ENCODE measurements at regions of chr3 and their contacts with region 1.

Region 1: DNA sequence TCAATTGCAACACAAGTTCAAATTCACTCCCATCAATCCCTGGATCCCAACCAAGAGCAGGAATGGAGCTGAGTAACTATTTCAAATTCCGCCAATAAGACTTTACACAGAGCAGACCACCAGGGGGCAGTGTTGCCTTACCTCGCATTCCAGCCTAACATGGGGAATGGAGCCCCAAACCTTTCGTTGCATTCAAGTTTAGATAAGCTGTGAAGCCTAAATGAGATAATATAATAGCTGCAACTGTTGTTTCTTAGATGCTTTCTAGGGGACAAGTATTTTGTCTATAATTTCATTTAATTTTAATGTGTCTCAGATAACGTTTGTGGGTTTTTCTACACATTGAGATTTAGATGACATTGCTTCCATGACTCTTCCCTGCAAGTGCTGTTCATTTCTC is 186.7 kb downstream of the NSUN3 start:
- DNase-seq: peak; percentile 64 to 81 (median 71)
- H3K4me3 ChIP-seq: no peak overlapping the region
- H3K27ac ChIP-seq: no peak overlapping the region
- H3K4me1 ChIP-seq: peaks cover 0 to 4% (median 1%) of the 10 kb centered on the region in 4 experiments
- H3K27me3 ChIP-seq: no peaks in the 10 kb centered on the region

Region 2: DNA sequence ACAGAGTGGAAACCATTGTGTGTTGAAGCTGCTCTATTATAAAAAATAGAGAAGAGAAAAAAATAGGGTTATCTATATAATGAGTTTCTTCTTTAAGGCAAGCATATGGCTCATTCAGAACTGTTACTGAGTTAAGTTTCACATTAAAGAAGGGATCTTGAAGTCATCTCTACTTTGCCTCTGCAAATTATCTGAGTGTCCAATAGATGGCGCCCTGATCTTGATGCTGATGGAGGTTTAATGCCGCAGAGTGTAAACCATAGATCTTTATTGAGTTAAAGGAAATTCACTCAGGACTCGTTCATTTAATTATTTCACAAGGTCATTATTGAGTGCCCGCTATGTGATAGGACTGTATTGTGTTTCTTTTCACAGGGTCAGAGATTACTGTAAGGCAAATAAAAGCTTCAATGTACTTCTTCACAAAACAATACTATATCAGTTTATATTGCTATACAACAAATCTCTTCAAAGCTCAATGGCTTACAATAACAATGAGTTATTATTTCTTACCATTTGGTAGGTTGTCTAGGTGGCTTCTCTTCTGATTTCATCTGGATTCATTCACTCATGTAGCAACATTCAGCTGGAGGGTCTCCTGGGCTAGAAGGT is 15.3 kb before region 1 on chr3:
- CTCF ChIA-PET with region 1: interaction called, 20 read pairs
- POLR2A ChIA-PET with region 1: no interaction called
- DNase-seq: peak; percentile 52 to 79 (median 73)
- H3K4me3 ChIP-seq: no peak overlapping the region
- H3K27ac ChIP-seq: no peak overlapping the region
- H3K4me1 ChIP-seq: peaks cover 10 to 13% (median 11%) of the 10 kb centered on the region in 4 experiments
- H3K27me3 ChIP-seq: no peaks in the 10 kb centered on the region

Region 3: GRCh38 chr3:94285870-94286269 is 36.3 kb after region 1 on chr3:
- CTCF ChIA-PET with region 1: interaction called, 13 read pairs
- POLR2A ChIA-PET with region 1: no interaction called
- DNase-seq: peak; percentile 22 to 43 (median 41)
- H3K4me3 ChIP-seq: no peak overlapping the region
- H3K27ac ChIP-seq: no peak overlapping the region
- H3K4me1 ChIP-seq: no peaks in the 10 kb centered on the region
- H3K27me3 ChIP-seq: no peaks in the 10 kb centered on the region

Region 4: DNA sequence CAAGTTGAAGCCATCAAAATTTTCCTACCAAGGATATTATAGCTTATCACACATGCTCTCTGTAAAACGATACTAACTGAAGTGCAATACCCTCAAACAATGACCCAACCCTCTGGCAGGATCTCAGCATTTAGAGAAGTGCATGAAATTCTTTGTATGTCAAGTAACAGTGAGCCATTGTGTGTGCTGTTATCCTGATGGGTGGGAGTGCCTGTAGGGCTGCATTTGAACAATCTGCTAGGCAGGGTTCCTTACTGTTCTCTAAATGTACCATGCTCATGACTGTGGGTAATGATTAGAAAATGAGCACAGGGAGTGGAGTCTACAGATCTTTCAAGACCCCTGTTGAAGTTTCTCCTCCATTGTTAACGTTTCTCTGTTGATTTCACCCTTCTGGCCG is 211.3 kb after region 1 on chr3:
- CTCF ChIA-PET with region 1: no interaction called
- POLR2A ChIA-PET with region 1: no interaction called
- DNase-seq: no peak
- H3K4me3 ChIP-seq: no peak overlapping the region
- H3K27ac ChIP-seq: no peak overlapping the region
- H3K4me1 ChIP-seq: no peaks in the 10 kb centered on the region
- H3K27me3 ChIP-seq: no peaks in the 10 kb centered on the region

Measured in common myeloid progenitor, CD34-positive (primary cell).